AG04450 (cell line): ENCODE measurements at regions of chr16 and their contacts with region 1.

Region 1: DNA sequence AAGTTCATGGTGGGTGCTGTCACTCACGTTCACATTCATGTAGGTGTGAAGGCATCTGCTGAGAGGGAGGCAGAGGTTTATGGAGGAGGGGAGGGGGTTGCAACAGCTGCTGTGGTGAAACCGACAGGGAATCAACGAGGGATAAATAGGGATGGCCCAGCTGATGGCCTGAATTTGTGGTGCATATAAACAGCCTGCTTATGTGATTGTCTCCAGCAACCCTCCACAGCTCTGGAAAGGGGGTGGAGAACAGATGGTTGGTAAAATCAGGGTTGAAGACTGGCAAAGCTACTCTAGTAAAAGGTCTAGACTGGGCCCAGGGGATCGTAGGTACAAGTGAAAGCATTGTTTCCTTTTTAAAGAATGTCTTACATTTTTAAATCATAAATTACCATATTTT is 53.7 kb downstream of the IQCK start:
- DNase-seq: no peak
- H3K4me3 ChIP-seq: no peak overlapping the region
- H3K27ac ChIP-seq: no peak overlapping the region
- H3K27me3 ChIP-seq: no peaks in the 10 kb centered on the region
- CTCF ChIP-seq: no peak

Region 2: GRCh38 chr16:19363740-19364139 is 408.1 kb before region 1 on chr16:
- CTCF ChIA-PET with region 1: no interaction called
- POLR2A ChIA-PET with region 1: no interaction called
- DNase-seq: no peak
- H3K4me3 ChIP-seq: no peak overlapping the region
- H3K27ac ChIP-seq: no peak overlapping the region
- H3K27me3 ChIP-seq: no peaks in the 10 kb centered on the region
- CTCF ChIP-seq: no peak

Region 3: DNA sequence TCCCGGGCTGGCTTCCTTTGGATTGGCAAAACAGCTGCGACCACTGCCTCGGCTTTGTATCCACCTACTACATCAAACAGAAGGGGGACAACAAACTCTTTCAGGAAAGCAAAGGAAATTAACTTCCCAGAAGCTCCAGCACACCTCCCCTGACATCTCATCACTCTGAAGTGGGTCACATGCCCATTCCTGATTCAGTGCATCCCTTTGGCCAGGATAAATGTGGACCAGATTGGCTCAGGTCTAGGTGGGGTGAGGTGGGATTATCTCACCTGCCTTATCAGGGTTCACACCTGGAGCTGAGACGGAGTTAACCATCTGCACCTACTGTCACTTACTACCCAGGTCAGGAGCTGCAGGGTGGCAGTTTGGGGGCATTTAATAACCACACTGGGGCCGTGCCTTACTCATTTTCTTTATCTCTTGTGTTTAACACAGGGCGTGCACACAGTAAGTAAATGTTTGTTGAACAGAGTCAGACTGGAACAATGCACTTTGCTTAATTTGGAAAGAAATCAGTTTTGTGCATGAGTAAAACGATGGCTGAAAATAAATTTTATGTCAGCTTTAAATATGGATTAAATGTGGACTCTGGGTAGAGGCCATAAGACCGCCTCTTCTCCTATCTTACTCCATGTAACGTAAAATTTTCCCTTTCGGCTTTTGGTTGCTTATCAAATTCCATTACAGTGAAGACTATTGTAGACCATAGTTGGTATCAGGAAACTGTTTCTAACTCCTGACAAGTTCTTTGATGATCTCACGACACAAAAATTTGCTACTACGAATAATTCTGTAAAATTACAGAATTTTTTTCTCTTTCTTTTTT is 17.8 kb before region 1 on chr16:
- CTCF ChIA-PET with region 1: interaction called, 14 read pairs
- POLR2A ChIA-PET with region 1: no interaction called
- DNase-seq: no peak
- H3K4me3 ChIP-seq: no peak overlapping the region
- H3K27ac ChIP-seq: no peak overlapping the region
- H3K27me3 ChIP-seq: no peaks in the 10 kb centered on the region
- CTCF ChIP-seq: no peak

Region 4: GRCh38 chr16:19804538-19805323 is 32.9 kb after region 1 on chr16:
- CTCF ChIA-PET with region 1: no interaction called
- POLR2A ChIA-PET with region 1: no interaction called
- DNase-seq: no peak
- H3K4me3 ChIP-seq: no peak overlapping the region
- H3K27ac ChIP-seq: no peak overlapping the region
- H3K27me3 ChIP-seq: no peaks in the 10 kb centered on the region
- CTCF ChIP-seq: no peak